ENCODE measurements at regions of chr6 and their contacts with region 1.

Region 1: GRCh38 chr6:38871741-38872568 is 156.8 kb downstream of the DNAH8 start:
- DNase-seq: peak; percentile 66
- H3K4me3 Mint-ChIP-seq: no peak overlapping the region
- H3K27ac Mint-ChIP-seq: no peak overlapping the region
- H3K4me1 Mint-ChIP-seq: peaks cover 6% of the 10 kb centered on the region
- H3K27me3 Mint-ChIP-seq: no peaks in the 10 kb centered on the region
- CTCF ChIP-seq: peak; percentile 77

Region 2: GRCh38 chr6:38686270-38687042 is 185.5 kb before region 1 on chr6:
- CTCF ChIA-PET with region 1: no interaction called
- POLR2A ChIA-PET with region 1: no interaction called
- intact Hi-C with region 1: no loop called
- DNase-seq: no peak
- H3K4me3 Mint-ChIP-seq: no peak overlapping the region
- H3K27ac Mint-ChIP-seq: no peak overlapping the region
- H3K4me1 Mint-ChIP-seq: peaks cover 10% of the 10 kb centered on the region
- H3K27me3 Mint-ChIP-seq: no peaks in the 10 kb centered on the region
- CTCF ChIP-seq: no peak

Region 3: GRCh38 chr6:38836585-38836984 is 35.4 kb before region 1 on chr6:
- CTCF ChIA-PET with region 1: interaction called, 11 read pairs
- POLR2A ChIA-PET with region 1: no interaction called
- intact Hi-C with region 1: no loop called
- DNase-seq: no peak
- H3K4me3 Mint-ChIP-seq: no peak overlapping the region
- H3K27ac Mint-ChIP-seq: peak overlapping the region; percentile 79
- H3K4me1 Mint-ChIP-seq: peaks cover 29% of the 10 kb centered on the region
- H3K27me3 Mint-ChIP-seq: no peaks in the 10 kb centered on the region
- CTCF ChIP-seq: no peak

Region 4: DNA sequence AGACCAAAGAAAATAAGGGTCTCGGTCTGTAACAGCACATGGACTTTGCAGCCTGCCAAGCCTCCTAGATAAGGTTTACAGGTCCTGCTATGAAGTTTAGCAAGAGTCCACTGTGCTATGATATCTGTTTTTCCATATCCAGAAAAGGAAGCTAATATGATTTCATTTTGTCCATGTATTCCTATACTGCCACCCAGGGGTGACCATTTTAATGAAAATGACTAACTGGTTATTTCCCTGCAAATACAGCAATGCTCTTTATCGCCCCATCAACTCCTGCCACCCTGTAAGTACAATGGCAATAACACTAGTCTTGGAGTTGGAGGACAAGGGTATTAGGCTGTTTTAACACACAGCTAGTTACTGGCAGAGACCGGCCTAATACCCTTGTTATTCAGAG is 61.5 kb after region 1 on chr6:
- CTCF ChIA-PET with region 1: interaction called, 27 read pairs
- POLR2A ChIA-PET with region 1: interaction called, 4 read pairs
- intact Hi-C with region 1: loop called (anchors 1 kb)
- DNase-seq: peak; percentile 47
- H3K4me3 Mint-ChIP-seq: no peak overlapping the region
- H3K27ac Mint-ChIP-seq: no peak overlapping the region
- H3K4me1 Mint-ChIP-seq: no peaks in the 10 kb centered on the region
- H3K27me3 Mint-ChIP-seq: peaks cover 36% of the 10 kb centered on the region
- CTCF ChIP-seq: peak; percentile 33

Region 5: DNA sequence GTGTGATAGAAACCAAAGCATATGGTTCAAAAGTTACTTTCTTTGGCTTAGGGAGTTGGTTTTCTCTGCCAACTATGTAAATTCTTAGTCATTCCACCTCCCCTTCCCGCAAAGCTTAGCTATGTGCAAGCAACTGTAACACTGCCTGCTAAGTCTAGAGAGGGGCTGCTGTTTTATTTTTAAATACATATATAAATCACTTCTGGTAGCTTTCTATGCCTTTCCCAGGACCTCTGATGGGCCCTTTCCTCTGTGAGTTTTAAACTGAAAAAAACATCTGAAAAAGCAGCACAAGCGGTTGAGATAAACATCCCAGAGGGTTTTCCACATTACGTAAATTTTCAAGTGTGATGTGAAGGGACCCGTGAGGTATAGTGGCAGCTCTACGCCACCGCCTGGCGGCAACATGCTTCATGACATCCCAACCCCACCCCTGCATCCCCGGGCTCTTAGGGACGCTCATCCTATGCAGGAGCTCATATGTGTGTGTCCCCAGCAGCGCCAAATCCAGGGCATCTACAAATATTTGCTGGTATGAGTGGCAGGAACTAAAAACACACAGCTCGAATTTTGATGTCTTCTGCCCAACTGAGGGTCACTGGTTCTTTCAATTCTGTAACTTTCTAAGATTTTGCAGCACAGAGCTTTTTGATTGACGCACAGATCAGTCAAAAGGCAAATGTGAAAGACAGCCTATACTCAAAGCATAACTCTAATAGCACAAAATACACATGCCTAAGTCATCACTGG is 230.3 kb after region 1 on chr6:
- CTCF ChIA-PET with region 1: interaction called, 6 read pairs
- POLR2A ChIA-PET with region 1: no interaction called
- intact Hi-C with region 1: loop called (anchors 5 kb)
- DNase-seq: peak; percentile 42
- H3K4me3 Mint-ChIP-seq: no peak overlapping the region
- H3K27ac Mint-ChIP-seq: no peak overlapping the region
- H3K4me1 Mint-ChIP-seq: no peaks in the 10 kb centered on the region
- H3K27me3 Mint-ChIP-seq: no peaks in the 10 kb centered on the region
- CTCF ChIP-seq: no peak

Region 6: DNA sequence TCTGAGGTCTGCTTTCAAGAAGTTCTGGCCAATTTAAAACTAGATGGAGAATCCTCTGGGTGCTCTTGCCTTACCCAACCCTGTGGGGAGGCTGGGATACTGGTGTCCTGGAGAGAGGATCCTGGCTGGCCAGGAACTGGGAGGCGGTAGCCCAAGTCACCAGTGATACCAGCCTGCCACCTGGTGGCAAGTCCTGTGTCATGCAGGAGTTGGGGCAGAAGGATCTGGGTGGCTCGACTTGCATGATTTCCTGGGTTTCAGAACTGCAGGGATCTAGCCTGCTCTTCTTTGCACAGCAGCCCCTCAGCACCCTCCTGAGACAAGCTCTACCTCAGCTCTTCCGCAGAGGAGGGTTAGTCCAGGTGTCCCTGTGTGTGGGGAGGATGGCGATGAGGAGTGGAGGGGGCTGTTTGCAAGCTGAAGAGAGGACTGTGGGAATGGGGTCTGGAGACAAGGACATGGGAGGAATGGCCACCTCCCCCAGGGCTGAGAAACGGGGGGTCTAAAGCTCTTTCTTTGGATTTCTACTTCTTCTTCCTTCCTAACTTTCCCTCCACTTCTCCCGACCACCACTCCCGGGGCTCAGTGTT is 438.1 kb after region 1 on chr6:
- CTCF ChIA-PET with region 1: interaction called, 46 read pairs
- POLR2A ChIA-PET with region 1: no interaction called
- intact Hi-C with region 1: no loop called
- DNase-seq: peak; percentile 78
- H3K4me3 Mint-ChIP-seq: no peak overlapping the region
- H3K27ac Mint-ChIP-seq: no peak overlapping the region
- H3K4me1 Mint-ChIP-seq: no peaks in the 10 kb centered on the region
- H3K27me3 Mint-ChIP-seq: peaks cover 14% of the 10 kb centered on the region
- CTCF ChIP-seq: peak; percentile 95